H1 (cell line): ENCODE measurements at regions of chr16 and their contacts with region 1.

Region 1: GRCh38 chr16:57300387-57301125 is 16.1 kb upstream of the PLLP start:
- DNase-seq: peak; percentile 98 to 100
- H3K4me3 ChIP-seq: peak overlapping the region; percentile 76 to 90 (median 82)
- H3K27ac ChIP-seq: no peak overlapping the region
- H3K4me1 ChIP-seq: peaks cover 0 to 5% (median 2%) of the 10 kb centered on the region in 4 experiments; a peak in 3 of 7 replicates
- H3K27me3 ChIP-seq: peaks cover 0 to 6% (median 2%) of the 10 kb centered on the region in 4 experiments; a peak in 2 of 7 replicates
- CTCF ChIP-seq: peak; percentile 92 to 100 (median 98)
- EP300 ChIP-seq: no peak; a peak in 1 of 3 replicates
- POLR2A ChIP-seq: no peak
- RAD21 ChIP-seq: peak; percentile 97 to 99

Region 2: DNA sequence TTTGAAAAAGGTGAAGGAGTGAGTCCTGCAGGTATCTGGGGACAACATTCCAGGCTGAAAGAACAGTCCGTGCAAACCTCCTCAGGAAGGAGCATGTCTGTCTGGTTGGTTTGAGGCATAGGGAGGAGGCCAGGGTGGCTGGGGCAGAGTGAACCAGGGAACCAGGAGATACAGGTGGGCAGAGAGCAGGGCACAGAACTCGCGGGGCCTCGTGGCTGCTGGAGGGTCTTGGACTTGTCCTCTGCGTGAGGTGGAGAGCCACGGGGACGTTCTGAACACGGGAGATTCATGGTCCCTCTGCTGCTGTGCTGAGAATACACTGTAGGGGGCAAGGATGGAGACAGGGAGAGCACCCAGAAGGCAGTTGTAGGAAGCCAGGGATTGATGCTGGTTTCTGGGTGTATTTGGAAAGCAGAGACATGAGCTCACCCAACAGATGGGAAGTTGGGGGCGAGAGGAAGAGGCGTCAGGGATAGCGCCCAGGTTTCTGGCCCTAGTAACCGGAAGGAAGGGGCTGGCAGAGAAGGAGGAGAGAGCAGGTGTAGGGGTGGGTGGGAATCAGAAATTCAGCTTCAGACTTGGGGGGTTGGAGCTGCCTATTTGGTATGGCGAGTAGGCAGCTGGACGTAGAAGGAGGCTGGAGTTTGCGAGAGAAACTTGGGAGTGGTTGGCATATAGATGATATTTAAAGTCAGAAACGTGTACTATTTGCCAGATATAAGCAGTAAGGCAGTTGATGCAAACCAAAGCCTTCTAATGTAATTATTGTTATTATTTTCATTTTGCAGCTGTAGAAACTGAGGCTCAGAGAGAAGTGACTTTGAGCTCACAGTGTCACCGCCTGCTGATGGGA is 103.6 kb after region 1 on chr16 and contains the start of gene CCL17:
- CTCF ChIA-PET with region 1: interaction called, 513 read pairs
- POLR2A ChIA-PET with region 1: no interaction called
- DNase-seq: no peak
- H3K4me3 ChIP-seq: no peak within 1 kb of the TSS
- H3K27ac ChIP-seq: no peak within 1 kb of the TSS
- H3K4me1 ChIP-seq: no peaks in the 10 kb centered on the region
- H3K27me3 ChIP-seq: no peaks in the 10 kb centered on the region
- CTCF ChIP-seq: no peak
- EP300 ChIP-seq: no peak
- POLR2A ChIP-seq: no peak
- RAD21 ChIP-seq: no peak
- total RNA-seq, gene CCL17: not detected in 2 replicates

Region 3: DNA sequence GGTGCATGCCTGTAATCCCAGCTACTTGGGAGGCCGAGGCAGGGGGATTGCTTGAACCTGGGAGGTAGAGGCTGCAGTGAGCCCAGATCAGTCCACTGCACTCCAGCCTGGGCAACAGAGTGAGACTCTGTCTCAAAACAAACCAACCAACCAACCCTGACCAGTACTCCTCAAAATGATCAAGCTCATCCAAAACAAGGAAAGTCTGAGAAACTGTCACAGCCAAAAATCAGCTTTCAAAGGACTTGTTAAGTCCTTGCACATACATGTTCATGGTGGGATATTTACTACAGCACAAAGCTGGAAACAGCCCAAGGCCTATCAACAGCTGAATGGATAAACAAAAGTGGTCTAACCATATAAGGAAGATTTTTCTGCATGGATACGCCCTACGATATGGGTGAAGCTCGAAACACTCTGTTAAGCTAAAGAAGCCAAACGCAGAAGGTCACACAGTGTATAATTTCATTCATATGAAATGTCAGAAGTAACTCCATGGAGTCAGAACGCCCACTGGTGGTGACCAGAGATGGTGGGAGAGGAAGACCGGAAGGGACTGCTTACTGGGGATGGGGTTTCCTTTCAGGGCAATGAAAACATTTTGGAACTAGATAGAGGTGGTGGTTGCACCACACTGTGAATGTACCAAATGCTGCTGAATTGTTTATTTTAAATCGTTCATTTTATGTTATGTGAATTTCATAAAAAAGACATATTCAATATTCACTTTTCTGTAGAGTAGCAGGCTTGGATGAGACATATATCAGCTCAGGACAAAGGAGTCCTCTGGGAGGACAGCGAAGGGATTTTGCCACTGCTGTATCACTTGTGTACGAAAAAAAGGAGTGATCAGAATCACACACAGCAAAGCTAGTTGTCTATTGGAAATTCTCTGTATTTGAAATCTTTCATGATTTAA is 121.7 kb after region 1 on chr16:
- CTCF ChIA-PET with region 1: interaction called, 513 read pairs
- POLR2A ChIA-PET with region 1: interaction called, 47 read pairs
- DNase-seq: peak in 1 of 2 experiments; percentile 60
- H3K4me3 ChIP-seq: no peak overlapping the region
- H3K27ac ChIP-seq: no peak overlapping the region
- H3K4me1 ChIP-seq: peaks cover 0 to 5% (median 1%) of the 10 kb centered on the region in 4 experiments; a peak in 3 of 7 replicates
- H3K27me3 ChIP-seq: no peaks in the 10 kb centered on the region
- CTCF ChIP-seq: peak; percentile 56 to 73 (median 61)
- EP300 ChIP-seq: no peak
- POLR2A ChIP-seq: no peak
- RAD21 ChIP-seq: peak; percentile 71 to 77